T-cell (primary cell): ENCODE measurements at regions of chr7 and their contacts with region 1.

Region 1: GRCh38 chr7:29851487-29851886 is 45.2 kb downstream of the WIPF3 start:
- DNase-seq: no peak
- ATAC-seq: no peak
- H3K4me3 ChIP-seq: no peak overlapping the region
- H3K4me3 Mint-ChIP-seq: no peak overlapping the region
- H3K27ac ChIP-seq: no peak overlapping the region
- H3K27ac Mint-ChIP-seq: no peak overlapping the region
- H3K4me1 ChIP-seq: no peaks in the 10 kb centered on the region
- H3K4me1 Mint-ChIP-seq: no peaks in the 10 kb centered on the region
- H3K27me3 ChIP-seq: peaks cover 0 to 13% of the 10 kb centered on the region in 2 experiments
- H3K27me3 Mint-ChIP-seq: peaks cover 7 to 11% of the 10 kb centered on the region in 2 donors

Region 2: GRCh38 chr7:30116771-30117170 is 265.3 kb after region 1 on chr7:
- CTCF ChIA-PET with region 1: no interaction called
- POLR2A ChIA-PET with region 1: interaction called in 1 of 2 experiments, 12 read pairs
- DNase-seq: no peak
- ATAC-seq: no peak
- H3K4me3 ChIP-seq: no peak overlapping the region
- H3K4me3 Mint-ChIP-seq: no peak overlapping the region
- H3K27ac ChIP-seq: no peak overlapping the region
- H3K27ac Mint-ChIP-seq: no peak overlapping the region
- H3K4me1 ChIP-seq: no peaks in the 10 kb centered on the region
- H3K4me1 Mint-ChIP-seq: peaks cover 7 to 10% (median 7%) of the 10 kb centered on the region in 3 donors
- H3K27me3 ChIP-seq: no peaks in the 10 kb centered on the region
- H3K27me3 Mint-ChIP-seq: no peaks in the 10 kb centered on the region